PC-3 (cell line): ENCODE measurements at regions of chr12 and their contacts with region 1.

Region 1: DNA sequence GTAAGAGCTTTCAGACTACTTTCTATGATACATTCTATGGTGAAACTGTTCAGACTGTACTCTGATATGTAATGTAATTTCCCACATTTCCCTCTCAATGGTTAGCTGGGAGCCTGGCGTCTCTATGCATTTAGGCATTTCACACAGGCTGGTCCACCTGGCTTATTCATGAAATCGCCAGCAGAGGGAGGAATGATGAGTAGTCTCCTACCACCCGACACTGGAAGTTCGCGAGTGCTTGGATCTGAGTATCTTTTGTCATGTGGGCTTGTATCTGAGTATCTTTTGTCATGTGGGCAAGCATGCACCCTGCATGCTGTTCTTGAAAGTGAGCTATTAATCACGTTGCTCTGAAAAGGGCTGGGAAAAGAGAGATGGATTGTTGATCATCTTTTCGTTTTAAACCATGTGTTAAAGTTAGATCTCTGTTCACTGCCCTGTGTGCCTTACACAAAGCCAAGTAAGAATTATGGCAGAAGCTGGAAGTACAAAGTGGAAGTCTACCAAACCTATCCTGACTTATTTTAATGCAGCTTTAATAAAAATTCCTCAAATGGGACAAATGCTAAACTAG is 235.0 kb downstream of the ATP23 start:
- DNase-seq: peak; percentile 85
- ATAC-seq: peak; percentile 96
- H3K4me3 ChIP-seq: no peak overlapping the region
- H3K27ac ChIP-seq: no peak overlapping the region
- H3K4me1 ChIP-seq: no peaks in the 10 kb centered on the region
- H3K27me3 ChIP-seq: no peaks in the 10 kb centered on the region
- CTCF ChIP-seq: peak; percentile 82

Region 2: GRCh38 chr12:57904848-57905811 is 271.3 kb before region 1 on chr12:
- CTCF ChIA-PET with region 1: no interaction called
- POLR2A ChIA-PET with region 1: no interaction called
- intact Hi-C with region 1: no loop called
- DNase-seq: peak; percentile 95
- ATAC-seq: peak; percentile 98
- H3K4me3 ChIP-seq: no peak overlapping the region
- H3K27ac ChIP-seq: no peak overlapping the region
- H3K4me1 ChIP-seq: peaks cover 7% of the 10 kb centered on the region; the same call in 1 of the 2 replicates
- H3K27me3 ChIP-seq: no peaks in the 10 kb centered on the region
- CTCF ChIP-seq: peak; percentile 100

Region 3: DNA sequence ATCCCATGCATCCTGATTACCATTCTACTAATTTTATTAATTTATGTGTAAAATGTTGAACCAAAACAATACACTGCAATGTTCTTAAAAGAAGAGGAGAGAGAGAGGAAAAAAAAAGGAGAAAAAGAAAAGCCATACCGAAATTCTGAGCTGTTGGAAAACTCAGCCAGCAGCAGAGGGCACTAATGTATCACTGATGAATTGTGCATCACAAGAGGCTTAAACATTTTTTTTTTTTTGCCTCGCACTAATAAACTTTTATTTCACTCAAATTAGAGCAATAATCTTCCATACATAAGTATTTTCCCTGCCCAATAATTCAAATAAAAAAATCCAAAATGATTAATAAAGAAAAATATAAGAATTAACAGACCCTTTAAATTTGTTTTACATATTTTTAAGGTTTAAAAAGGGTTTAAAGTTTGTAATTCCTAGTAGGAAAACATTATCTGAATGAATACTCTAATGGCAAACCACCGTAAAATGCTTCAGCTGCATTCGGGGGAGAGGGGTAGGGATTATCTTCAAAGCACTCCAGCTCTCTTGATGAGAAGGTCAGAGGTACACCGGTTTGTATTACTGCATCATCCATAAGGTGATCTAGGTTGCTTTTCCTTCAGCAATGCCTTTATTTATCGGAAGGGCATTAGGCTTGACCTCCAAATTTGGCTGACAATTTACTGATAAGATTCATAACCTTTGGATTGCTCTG is 193.1 kb before region 1 on chr12:
- CTCF ChIA-PET with region 1: no interaction called
- POLR2A ChIA-PET with region 1: no interaction called
- intact Hi-C with region 1: loop called (anchors 10 kb)
- DNase-seq: peak; percentile 73
- ATAC-seq: no peak
- H3K4me3 ChIP-seq: no peak overlapping the region
- H3K27ac ChIP-seq: no peak overlapping the region
- H3K4me1 ChIP-seq: peaks cover 12% of the 10 kb centered on the region; the same call in 1 of the 2 replicates
- H3K27me3 ChIP-seq: no peaks in the 10 kb centered on the region
- CTCF ChIP-seq: peak; percentile 78

Region 4: DNA sequence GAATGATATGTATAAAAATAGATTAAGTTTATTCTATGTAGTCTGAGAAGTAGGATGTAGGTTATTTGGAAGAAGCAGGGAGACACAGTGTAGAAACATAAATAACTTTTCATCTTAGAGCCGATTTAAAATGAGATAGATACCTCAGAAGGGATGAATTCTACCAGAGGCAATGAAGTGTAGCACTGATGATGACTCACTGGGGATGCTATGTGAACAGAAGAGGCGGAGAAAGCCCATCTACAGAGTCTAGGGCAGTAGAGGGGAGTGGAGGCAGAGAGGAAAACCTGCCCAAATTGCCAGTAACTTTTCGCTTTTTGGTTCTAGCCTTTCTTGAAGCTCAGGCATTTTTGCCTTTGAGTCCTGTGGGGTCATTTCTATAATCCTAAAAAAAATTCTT is 216.8 kb after region 1 on chr12:
- CTCF ChIA-PET with region 1: no interaction called
- POLR2A ChIA-PET with region 1: no interaction called
- intact Hi-C with region 1: no loop called
- DNase-seq: peak; percentile 48
- ATAC-seq: peak; percentile 48; the same call in 1 of the 2 replicates
- H3K4me3 ChIP-seq: no peak overlapping the region
- H3K27ac ChIP-seq: no peak overlapping the region
- H3K4me1 ChIP-seq: peaks cover 14% of the 10 kb centered on the region
- H3K27me3 ChIP-seq: no peaks in the 10 kb centered on the region
- CTCF ChIP-seq: no peak